Testis (tissue), 5 donors: ENCODE measurements at regions of chr3 and their contacts with region 1.

Region 1: GRCh38 chr3:113136071-113136470 is 75.3 kb upstream of the BOC start:
- DNase-seq: no peak
- H3K4me3 ChIP-seq: no peak overlapping the region
- H3K27ac ChIP-seq: no peak overlapping the region
- H3K4me1 ChIP-seq: no peaks in the 10 kb centered on the region
- H3K27me3 ChIP-seq: no peaks in the 10 kb centered on the region
- CTCF ChIP-seq: peak; percentile 45 to 67 (median 65)
- POLR2A ChIP-seq: no peak

Region 2: DNA sequence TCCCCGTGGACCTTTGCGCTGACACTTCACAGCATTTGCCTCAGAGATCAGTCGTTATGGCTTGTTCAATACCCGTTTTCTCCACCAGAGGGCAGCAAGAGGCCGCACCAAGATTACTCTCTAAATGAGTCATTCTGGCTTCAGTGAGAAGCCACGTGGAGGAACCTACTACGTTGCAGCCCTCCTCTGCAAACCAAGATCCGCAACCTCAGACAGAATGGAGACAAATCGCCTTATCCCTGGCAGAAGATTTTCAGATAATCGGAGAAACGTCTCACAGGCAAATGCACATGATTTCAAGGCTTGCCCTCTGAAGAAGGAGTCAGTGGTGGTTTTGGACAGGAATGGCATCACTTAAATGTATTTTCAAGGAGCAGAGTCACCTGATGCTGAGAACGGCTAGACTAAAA is 84.8 kb before region 1 on chr3:
- intact Hi-C with region 1: loop called (anchors 10 kb)
- DNase-seq: peak; percentile 96
- H3K4me3 ChIP-seq: no peak overlapping the region
- H3K27ac ChIP-seq: peak overlapping the region; percentile 48 to 51
- H3K4me1 ChIP-seq: peaks cover 9% of the 10 kb centered on the region
- H3K27me3 ChIP-seq: no peaks in the 10 kb centered on the region
- CTCF ChIP-seq: peak; percentile 97 to 99 (median 98)
- POLR2A ChIP-seq: no peak